T-cell (primary cell): ENCODE measurements at regions of chr3 and their contacts with region 1.

Region 1: DNA sequence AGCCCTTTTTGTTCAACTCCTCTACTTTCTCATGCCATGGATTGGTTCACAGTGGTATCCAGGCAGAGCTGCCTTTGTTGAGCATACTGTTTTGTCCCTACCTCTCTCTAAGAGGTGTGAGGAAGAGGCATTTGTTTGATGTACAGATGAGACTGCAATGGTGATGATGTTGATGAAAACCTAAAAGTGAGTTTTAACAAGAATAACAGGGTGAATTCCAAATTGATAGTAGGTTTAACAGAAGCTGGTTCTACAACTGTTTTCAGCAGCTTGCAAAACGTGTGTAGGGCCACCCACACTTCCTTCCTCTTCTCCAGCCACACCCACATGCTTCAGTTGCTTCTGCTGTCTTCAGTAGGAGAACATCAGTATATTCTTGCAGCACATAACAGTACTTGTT is 10.2 kb downstream of the SNRK start:
- DNase-seq: peak in 34 of 35 experiments; percentile 33 to 91 (median 75)
- ATAC-seq: peak; percentile 90 to 97 (median 94)
- H3K4me3 ChIP-seq: peak overlapping the region in 1 of 2 donors; percentile 27
- H3K4me3 Mint-ChIP-seq: peak overlapping the region; percentile 80 to 91 (median 86)
- H3K27ac ChIP-seq: peak overlapping the region; percentile 88
- H3K27ac Mint-ChIP-seq: peak overlapping the region; percentile 96 to 99
- H3K4me1 ChIP-seq: peaks cover 52 to 84% of the 10 kb centered on the region in 2 experiments
- H3K4me1 Mint-ChIP-seq: peaks cover 85 to 91% (median 86%) of the 10 kb centered on the region in 3 donors
- H3K27me3 ChIP-seq: no peaks in the 10 kb centered on the region
- H3K27me3 Mint-ChIP-seq: no peaks in the 10 kb centered on the region

Region 2: GRCh38 chr3:43286115-43286840 is 10.3 kb before region 1 on chr3 and contains the start of gene SNRK:
- CTCF ChIA-PET with region 1: interaction called in 1 of 2 experiments, 11 read pairs
- POLR2A ChIA-PET with region 1: interaction called, 6 to 25 read pairs
- DNase-seq: peak; percentile 74 to 96 (median 88)
- ATAC-seq: peak; percentile 84 to 87 (median 85)
- H3K4me3 ChIP-seq: peak within 1 kb of the TSS; percentile 71 to 98
- H3K4me3 Mint-ChIP-seq: peak within 1 kb of the TSS; percentile 91 to 98 (median 96)
- H3K27ac ChIP-seq: peak within 1 kb of the TSS; percentile 73
- H3K27ac Mint-ChIP-seq: peak within 1 kb of the TSS; percentile 98 to 99
- H3K4me1 ChIP-seq: peaks cover 29 to 30% of the 10 kb centered on the region in 2 experiments
- H3K4me1 Mint-ChIP-seq: peaks cover 31 to 33% (median 32%) of the 10 kb centered on the region in 3 donors
- H3K27me3 ChIP-seq: no peaks in the 10 kb centered on the region
- H3K27me3 Mint-ChIP-seq: no peaks in the 10 kb centered on the region
- total RNA-seq, gene SNRK: 88.1 to 165 (median 107) TPM

Region 3: DNA sequence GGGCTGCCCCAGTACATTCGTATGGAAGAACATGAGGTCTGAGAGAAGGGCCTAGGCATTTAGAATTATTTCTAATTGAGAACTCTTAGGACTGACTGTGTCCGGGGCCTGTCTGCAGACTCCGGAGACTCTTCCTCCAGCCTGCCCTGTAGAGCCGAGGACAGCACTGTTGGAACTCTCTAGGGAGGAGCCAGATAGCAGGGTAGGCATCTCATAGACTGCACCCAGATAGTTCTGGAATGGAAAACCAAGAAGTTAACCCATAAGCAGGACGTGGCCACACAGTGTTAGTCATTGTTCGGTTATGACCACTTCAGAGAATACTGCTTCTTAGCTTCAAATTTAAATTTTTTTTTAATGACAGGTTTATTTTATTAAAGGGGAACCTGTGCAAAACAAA is 49.3 kb after region 1 on chr3:
- CTCF ChIA-PET with region 1: interaction called in 1 of 2 experiments, 8 read pairs
- POLR2A ChIA-PET with region 1: interaction called, 4 to 10 read pairs
- DNase-seq: no peak
- ATAC-seq: peak in 1 of 4 experiments; percentile 22
- H3K4me3 ChIP-seq: no peak overlapping the region
- H3K4me3 Mint-ChIP-seq: peak overlapping the region in 2 of 3 donors; percentile 7 to 73
- H3K27ac ChIP-seq: peak overlapping the region; percentile 85
- H3K27ac Mint-ChIP-seq: peak overlapping the region; percentile 91 to 92
- H3K4me1 ChIP-seq: peaks cover 63 to 68% of the 10 kb centered on the region in 2 experiments
- H3K4me1 Mint-ChIP-seq: peaks cover 82 to 83% (median 83%) of the 10 kb centered on the region in 3 donors
- H3K27me3 ChIP-seq: no peaks in the 10 kb centered on the region
- H3K27me3 Mint-ChIP-seq: no peaks in the 10 kb centered on the region

Region 4: GRCh38 chr3:43389388-43390254 is 93.1 kb after region 1 on chr3:
- CTCF ChIA-PET with region 1: interaction called in 1 of 2 experiments, 13 read pairs
- POLR2A ChIA-PET with region 1: interaction called in 1 of 2 experiments, 5 read pairs
- DNase-seq: peak; percentile 52 to 89 (median 73)
- ATAC-seq: peak; percentile 94 to 98 (median 96)
- H3K4me3 ChIP-seq: peak overlapping the region; percentile 8 to 15
- H3K4me3 Mint-ChIP-seq: peak overlapping the region; percentile 26 to 60 (median 53)
- H3K27ac ChIP-seq: peak overlapping the region; percentile 91
- H3K27ac Mint-ChIP-seq: peak overlapping the region; percentile 96 to 97
- H3K4me1 ChIP-seq: peaks cover 35 to 36% of the 10 kb centered on the region in 2 experiments
- H3K4me1 Mint-ChIP-seq: peaks cover 85 to 93% (median 85%) of the 10 kb centered on the region in 3 donors
- H3K27me3 ChIP-seq: no peaks in the 10 kb centered on the region
- H3K27me3 Mint-ChIP-seq: no peaks in the 10 kb centered on the region

Region 5: GRCh38 chr3:43676441-43676840 is 379.9 kb after region 1 on chr3:
- CTCF ChIA-PET with region 1: no interaction called
- POLR2A ChIA-PET with region 1: no interaction called
- DNase-seq: no peak
- ATAC-seq: no peak
- H3K4me3 ChIP-seq: no peak overlapping the region
- H3K4me3 Mint-ChIP-seq: no peak overlapping the region
- H3K27ac ChIP-seq: no peak overlapping the region
- H3K27ac Mint-ChIP-seq: no peak overlapping the region
- H3K4me1 ChIP-seq: no peaks in the 10 kb centered on the region
- H3K4me1 Mint-ChIP-seq: no peaks in the 10 kb centered on the region
- H3K27me3 ChIP-seq: no peaks in the 10 kb centered on the region
- H3K27me3 Mint-ChIP-seq: peaks cover 3 to 11% of the 10 kb centered on the region in 2 donors